ENCODE measurements at regions of chr11 and their contacts with region 1.

Region 1: GRCh38 chr11:66222358-66223149 is 45.9 kb upstream of the RAB1B start:
- DNase-seq: peak; percentile 96

Region 2: DNA sequence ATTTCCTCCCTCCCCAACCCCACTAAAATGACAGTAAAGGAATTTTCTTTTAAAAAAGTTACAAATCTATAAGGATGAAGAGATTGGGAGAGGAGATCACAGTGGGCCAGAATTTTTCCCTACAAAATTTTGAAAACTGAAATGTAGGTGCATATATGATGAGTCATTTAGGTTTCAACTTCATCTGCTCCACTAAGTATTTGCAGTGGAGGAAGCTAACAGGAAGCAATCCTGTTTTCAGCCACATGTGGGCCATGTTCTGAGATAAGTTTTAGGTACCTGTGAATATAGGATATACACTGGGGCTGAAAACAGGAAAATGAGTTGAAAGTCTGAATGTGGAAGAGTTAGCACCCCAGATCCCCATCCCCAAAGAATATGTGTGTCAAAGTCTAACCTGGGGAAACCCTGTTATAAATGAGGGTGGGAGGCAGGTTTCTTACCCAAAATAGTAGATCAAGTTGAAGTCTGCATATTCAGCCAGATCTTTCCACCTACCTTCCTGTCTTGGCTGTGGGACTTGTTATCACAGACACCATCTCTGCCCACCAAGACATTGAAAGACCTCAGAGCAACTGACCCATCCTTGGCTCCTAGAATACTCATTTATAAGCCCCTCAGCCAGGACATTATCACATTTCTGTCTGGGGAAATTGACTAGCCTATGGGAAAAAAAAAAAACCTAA is 65.2 kb before region 1 on chr11:
- intact Hi-C with region 1: no loop called
- DNase-seq: no peak

Region 3: GRCh38 chr11:66282468-66283386 is 60.2 kb after region 1 on chr11:
- intact Hi-C with region 1: loop called in 1 of 2 experiments (anchors 10 kb)
- DNase-seq: peak; percentile 100

Region 4: GRCh38 chr11:66600631-66601233 is 378.2 kb after region 1 on chr11:
- intact Hi-C with region 1: no loop called
- DNase-seq: no peak